Activated CD4-positive, alpha-beta memory T cell treated with anti-CD3 and anti-CD28 coated beads for 36 hours (primary cell): ENCODE measurements at regions of chr5 and their contacts with region 1.

Region 1: DNA sequence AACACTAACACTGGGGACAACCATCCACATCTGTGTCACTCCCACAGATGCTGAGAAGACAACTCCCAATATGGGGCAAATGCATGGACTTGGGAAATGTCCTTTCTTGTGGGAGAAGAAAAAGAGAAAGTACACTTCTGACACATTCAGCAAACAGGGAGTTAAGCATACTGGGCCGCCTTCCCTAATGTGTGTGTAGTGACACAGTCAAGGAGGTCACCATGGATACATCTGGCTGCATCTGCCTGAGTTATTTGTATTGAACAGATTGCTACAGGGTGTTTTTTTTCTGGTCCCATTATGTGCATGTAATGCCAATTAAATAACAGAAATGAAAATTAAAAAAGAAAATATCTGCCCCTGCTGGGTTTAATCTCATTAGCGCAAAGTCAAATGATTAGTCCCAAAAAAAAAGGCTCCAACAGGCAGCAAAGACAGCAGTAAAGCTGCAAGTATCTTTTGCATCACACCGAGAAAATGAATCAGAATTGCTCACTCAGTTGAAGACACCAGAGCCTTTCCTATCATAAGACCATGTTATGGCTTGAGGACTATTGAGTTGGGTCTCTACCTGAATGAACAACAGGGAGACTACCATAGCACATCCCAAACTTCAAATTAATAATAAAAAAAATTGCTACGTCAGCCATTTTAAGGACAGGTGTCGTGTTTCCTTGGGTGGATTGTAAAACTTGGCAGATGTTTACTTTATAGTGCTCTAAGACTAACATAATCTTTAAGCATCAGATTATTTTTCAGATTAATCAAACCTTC is 395.9 kb downstream of the DTWD2 start:
- DNase-seq: no peak
- H3K4me3 Mint-ChIP-seq: no peak overlapping the region
- H3K27ac Mint-ChIP-seq: no peak overlapping the region
- H3K4me1 Mint-ChIP-seq: no peaks in the 10 kb centered on the region
- H3K27me3 Mint-ChIP-seq: no peaks in the 10 kb centered on the region

Region 2: DNA sequence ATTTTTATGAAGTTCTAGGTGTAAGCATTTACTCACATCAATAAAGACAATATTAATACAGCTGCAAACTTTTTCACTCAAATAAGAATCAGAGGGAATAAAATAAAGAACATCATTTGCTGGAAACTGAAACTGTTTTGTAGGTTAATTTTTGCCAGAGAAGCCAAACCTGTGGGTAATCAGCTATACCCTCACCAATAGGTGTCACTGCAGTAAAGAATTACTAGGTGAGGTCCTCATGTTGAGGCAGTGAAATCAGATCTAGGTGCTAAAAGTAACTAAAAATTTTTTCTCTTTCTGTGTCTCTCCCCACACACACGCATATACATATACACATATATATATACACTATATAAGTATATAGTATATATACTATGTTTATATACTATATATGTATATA is 1001.5 kb before region 1 on chr5:
- CTCF ChIA-PET with region 1: no interaction called
- POLR2A ChIA-PET with region 1: no interaction called
- intact Hi-C with region 1: no loop called
- DNase-seq: no peak
- H3K4me3 Mint-ChIP-seq: no peak overlapping the region
- H3K27ac Mint-ChIP-seq: no peak overlapping the region
- H3K4me1 Mint-ChIP-seq: no peaks in the 10 kb centered on the region
- H3K27me3 Mint-ChIP-seq: no peaks in the 10 kb centered on the region

Region 3: GRCh38 chr5:118533156-118533555 is 59.3 kb before region 1 on chr5:
- CTCF ChIA-PET with region 1: no interaction called
- POLR2A ChIA-PET with region 1: no interaction called
- intact Hi-C with region 1: no loop called
- DNase-seq: no peak
- H3K4me3 Mint-ChIP-seq: no peak overlapping the region
- H3K27ac Mint-ChIP-seq: no peak overlapping the region
- H3K4me1 Mint-ChIP-seq: no peaks in the 10 kb centered on the region
- H3K27me3 Mint-ChIP-seq: no peaks in the 10 kb centered on the region

Region 4: GRCh38 chr5:118611332-118611945 is 19.0 kb after region 1 on chr5:
- CTCF ChIA-PET with region 1: no interaction called
- POLR2A ChIA-PET with region 1: no interaction called
- intact Hi-C with region 1: loop called (anchors 1 kb)
- DNase-seq: peak; percentile 10
- H3K4me3 Mint-ChIP-seq: no peak overlapping the region
- H3K27ac Mint-ChIP-seq: no peak overlapping the region
- H3K4me1 Mint-ChIP-seq: no peaks in the 10 kb centered on the region
- H3K27me3 Mint-ChIP-seq: no peaks in the 10 kb centered on the region